Posterior cingulate gyrus (tissue), 11 donors: ENCODE measurements at regions of chr6 and their contacts with region 1.

Region 1: GRCh38 chr6:105733565-105734162 is 330.8 kb upstream of the PREP start:
- DNase-seq: no peak

Region 2: DNA sequence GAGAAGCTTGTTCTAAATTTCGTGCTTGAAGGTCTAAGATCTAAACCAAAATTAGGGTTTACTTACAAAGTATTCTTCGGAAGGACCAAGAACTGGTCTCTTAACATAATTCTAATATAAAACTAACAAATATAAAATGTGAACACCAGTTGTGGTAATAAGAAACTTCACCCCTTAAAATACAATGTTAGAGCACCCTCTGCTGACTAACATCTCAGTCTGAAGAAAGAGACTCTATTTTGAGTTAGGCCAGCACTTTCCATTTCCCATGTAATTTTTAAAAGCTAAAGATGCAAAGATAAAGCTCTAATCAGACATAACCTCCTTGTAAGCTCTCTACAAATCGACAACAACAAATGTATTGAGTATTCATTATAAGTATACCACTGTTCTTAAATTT is 567.3 kb after region 1 on chr6:
- intact Hi-C with region 1: loop called (anchors 5 kb)
- DNase-seq: no peak